ENCODE measurements at regions of chrX and their contacts with region 1.

Region 1: GRCh38 chrX:13000301-13000811 is 25.4 kb downstream of the TMSB4X start:
- DNase-seq: peak in 6 of 9 experiments; percentile 31 to 73 (median 54)
- ATAC-seq: peak; percentile 55
- H3K4me3 ChIP-seq: peak overlapping the region; percentile 16 to 40
- H3K4me3 Mint-ChIP-seq: peak overlapping the region; percentile 82
- H3K27ac ChIP-seq: peak overlapping the region; percentile 65 to 84
- H3K27ac Mint-ChIP-seq: peak overlapping the region; percentile 96
- H3K4me1 ChIP-seq: peaks cover 68% of the 10 kb centered on the region
- H3K4me1 Mint-ChIP-seq: peaks cover 79% of the 10 kb centered on the region
- H3K27me3 ChIP-seq: no peaks in the 10 kb centered on the region
- H3K27me3 Mint-ChIP-seq: no peaks in the 10 kb centered on the region
- CTCF ChIP-seq: no peak

Region 2: GRCh38 chrX:12791257-12792228 is 208.8 kb before region 1 on chrX and contains the start of gene PRPS2:
- CTCF ChIA-PET with region 1: no interaction called
- POLR2A ChIA-PET with region 1: no interaction called
- intact Hi-C with region 1: no loop called
- DNase-seq: peak; percentile 43 to 80 (median 71)
- ATAC-seq: peak; percentile 93
- H3K4me3 ChIP-seq: peak within 1 kb of the TSS; percentile 69 to 74
- H3K4me3 Mint-ChIP-seq: peak within 1 kb of the TSS; percentile 90
- H3K27ac ChIP-seq: peak within 1 kb of the TSS; percentile 39 to 52
- H3K27ac Mint-ChIP-seq: peak within 1 kb of the TSS; percentile 81
- H3K4me1 ChIP-seq: peaks cover 9% of the 10 kb centered on the region
- H3K4me1 Mint-ChIP-seq: peaks cover 26% of the 10 kb centered on the region
- H3K27me3 ChIP-seq: no peaks in the 10 kb centered on the region
- H3K27me3 Mint-ChIP-seq: no peaks in the 10 kb centered on the region
- CTCF ChIP-seq: no peak
- total RNA-seq, gene PRPS2: 10.5 to 13.4 TPM

Region 3: DNA sequence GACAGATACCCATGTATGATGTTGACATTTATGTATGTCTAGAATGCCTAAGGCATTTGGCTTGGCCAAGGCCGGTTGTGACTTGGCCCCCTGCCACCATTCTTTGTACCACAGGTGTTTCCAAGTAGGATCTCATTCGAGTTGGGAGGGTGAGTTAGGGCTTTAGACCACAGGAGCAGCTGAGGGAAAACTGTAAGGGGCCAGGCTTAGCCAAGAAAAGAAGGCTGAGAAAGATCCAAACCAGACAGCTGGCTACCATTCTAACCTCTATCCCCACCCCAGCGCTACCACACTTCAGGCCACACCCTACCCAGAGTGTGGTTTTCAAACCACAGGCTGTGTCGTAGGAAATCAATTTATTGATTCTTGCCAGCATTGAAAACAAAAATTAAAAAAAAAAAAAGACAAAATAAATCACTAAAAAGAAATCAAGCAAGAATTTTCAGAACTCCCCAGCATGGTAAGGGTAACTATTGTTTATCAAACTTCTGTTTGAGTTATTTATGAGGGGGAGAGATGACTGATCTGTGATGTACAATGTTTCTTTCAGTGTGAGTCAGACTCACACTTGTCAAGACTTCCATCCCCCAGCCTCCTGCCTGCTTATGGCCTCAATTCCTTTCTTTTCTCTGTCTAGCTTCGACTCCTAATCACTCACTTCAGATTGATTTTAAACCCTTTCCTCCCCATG is 15.6 kb before region 1 on chrX:
- CTCF ChIA-PET with region 1: interaction called, 10 read pairs
- POLR2A ChIA-PET with region 1: interaction called, 95 read pairs
- intact Hi-C with region 1: loop called (anchors 2 kb)
- DNase-seq: peak in 6 of 9 experiments; percentile 50 to 76 (median 60)
- ATAC-seq: peak; percentile 74
- H3K4me3 ChIP-seq: peak overlapping the region in 1 of 2 experiments; percentile 20
- H3K4me3 Mint-ChIP-seq: peak overlapping the region; percentile 78
- H3K27ac ChIP-seq: peak overlapping the region; percentile 62 to 72
- H3K27ac Mint-ChIP-seq: peak overlapping the region; percentile 99
- H3K4me1 ChIP-seq: peaks cover 69% of the 10 kb centered on the region
- H3K4me1 Mint-ChIP-seq: peaks cover 72% of the 10 kb centered on the region
- H3K27me3 ChIP-seq: no peaks in the 10 kb centered on the region
- H3K27me3 Mint-ChIP-seq: no peaks in the 10 kb centered on the region
- CTCF ChIP-seq: no peak

Region 4: GRCh38 chrX:13013363-13014110 is 13.2 kb after region 1 on chrX:
- CTCF ChIA-PET with region 1: interaction called, 5 read pairs
- POLR2A ChIA-PET with region 1: interaction called, 9 read pairs
- intact Hi-C with region 1: loop called in 1 of 2 experiments (anchors 2 kb)
- DNase-seq: peak in 2 of 9 experiments; percentile 30 to 65
- ATAC-seq: peak; percentile 78
- H3K4me3 ChIP-seq: peak overlapping the region; percentile 14 to 18
- H3K4me3 Mint-ChIP-seq: peak overlapping the region; percentile 47
- H3K27ac ChIP-seq: peak overlapping the region; percentile 47 to 84
- H3K27ac Mint-ChIP-seq: peak overlapping the region; percentile 95
- H3K4me1 ChIP-seq: peaks cover 42% of the 10 kb centered on the region
- H3K4me1 Mint-ChIP-seq: peaks cover 57% of the 10 kb centered on the region
- H3K27me3 ChIP-seq: no peaks in the 10 kb centered on the region
- H3K27me3 Mint-ChIP-seq: no peaks in the 10 kb centered on the region
- CTCF ChIP-seq: no peak

Measured in CD8-positive, alpha-beta T cell (primary cell).